ENCODE measurements at regions of chr12 and their contacts with region 1.

Region 1: GRCh38 chr12:546921-547845 is 87.4 kb downstream of the B4GALNT3 start:
- DNase-seq: peak in 1 of 2 donors; percentile 64
- H3K4me3 ChIP-seq: peak overlapping the region in 1 of 3 donors; percentile 25
- H3K27ac ChIP-seq: no peak overlapping the region
- H3K4me1 ChIP-seq: no peaks in the 10 kb centered on the region
- H3K27me3 ChIP-seq: no peaks in the 10 kb centered on the region
- CTCF ChIP-seq: peak; percentile 88 to 99 (median 92)
- POLR2A ChIP-seq: no peak

Region 2: DNA sequence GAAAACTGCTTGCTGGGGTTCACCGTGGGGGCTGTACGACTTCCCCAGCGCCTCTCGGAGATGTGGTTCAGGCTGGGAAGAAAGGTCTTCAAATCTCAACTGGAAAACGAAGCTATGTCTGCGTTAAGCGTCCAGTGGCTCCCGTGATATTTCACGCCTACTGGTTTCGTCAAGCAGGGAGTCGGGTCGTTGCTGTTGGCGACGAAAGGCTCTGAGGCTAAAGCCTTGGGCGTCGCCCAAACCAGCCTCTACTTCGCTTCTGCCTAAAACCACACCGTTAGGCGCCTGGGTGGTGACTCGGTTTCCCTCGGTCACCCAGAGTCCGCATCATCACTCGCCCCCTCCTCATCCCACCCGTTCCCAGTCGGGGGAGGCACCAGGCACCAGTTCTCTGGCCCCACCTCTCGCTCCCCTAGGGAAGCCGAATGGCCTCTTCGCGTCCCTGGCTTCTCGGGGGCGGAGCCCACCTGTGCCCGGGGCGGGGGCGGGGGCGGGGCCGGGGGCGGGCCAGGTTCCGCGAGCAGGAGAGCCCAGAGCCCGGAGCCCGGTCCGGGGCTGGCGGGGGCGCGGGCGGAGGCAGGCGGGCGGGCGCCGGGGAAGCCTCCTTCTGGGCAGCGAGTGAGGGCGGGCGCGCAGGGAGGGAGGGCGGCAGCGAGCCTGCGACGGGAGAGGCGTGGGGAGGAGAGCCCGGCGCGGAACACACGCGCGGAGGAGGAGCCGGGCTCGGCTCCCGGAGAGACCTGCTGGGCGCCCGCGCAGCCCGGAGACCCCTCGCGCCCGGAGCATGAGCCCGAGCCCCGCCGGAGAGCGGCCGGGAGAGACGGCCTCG is 87.5 kb before region 1 on chr12 and contains the start of gene B4GALNT3:
- intact Hi-C with region 1: loop called (anchors 10 kb)
- DNase-seq: peak in 1 of 2 donors; percentile 37
- H3K4me3 ChIP-seq: peak within 1 kb of the TSS; percentile 46 to 83 (median 70)
- H3K27ac ChIP-seq: peak within 1 kb of the TSS; percentile 25 to 56
- H3K4me1 ChIP-seq: no peaks in the 10 kb centered on the region
- H3K27me3 ChIP-seq: no peaks in the 10 kb centered on the region
- CTCF ChIP-seq: no peak
- POLR2A ChIP-seq: no peak
- total RNA-seq, gene B4GALNT3: 0.16 to 5.9 (median 4.6) TPM